Mammary epithelial cell (primary cell): ENCODE measurements at regions of chr6 and their contacts with region 1.

Region 1: DNA sequence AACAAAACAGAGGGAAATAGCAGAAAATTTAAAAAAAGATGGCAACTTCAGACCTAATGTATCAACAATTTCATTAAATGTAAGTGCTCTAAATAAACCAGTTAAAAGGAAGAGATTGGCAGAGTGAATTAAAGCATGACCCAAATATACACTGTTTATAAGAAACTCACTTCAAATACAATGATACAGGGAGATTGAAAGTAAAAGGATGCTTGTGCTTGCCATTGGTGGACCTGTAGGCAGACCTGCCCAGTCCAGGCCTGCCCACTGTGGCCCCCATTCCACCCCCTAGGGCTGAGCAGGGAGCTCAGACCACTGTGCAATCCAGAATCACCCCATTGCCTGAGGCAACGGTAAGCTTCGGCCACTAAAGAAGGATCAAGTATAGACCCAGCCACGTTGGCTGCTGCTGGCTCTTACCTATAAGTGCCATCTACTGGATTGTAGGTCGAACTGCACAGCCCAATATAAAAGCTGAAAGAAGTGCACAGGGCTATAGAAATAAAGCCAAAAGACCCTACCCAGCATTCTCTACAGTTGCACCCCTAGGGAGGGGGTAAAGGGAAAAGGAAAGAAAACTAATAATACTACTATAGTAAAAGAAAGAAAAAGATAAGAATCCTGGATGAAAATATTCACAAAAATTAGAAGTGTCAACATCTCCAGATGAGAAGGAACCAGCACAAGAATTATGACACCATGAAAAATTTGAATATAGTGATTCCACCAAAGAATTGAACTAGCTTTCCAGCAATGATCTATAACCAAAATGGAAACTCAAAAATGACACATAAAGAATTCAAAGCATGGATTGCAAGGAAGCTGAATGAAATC is 36.1 kb downstream of the PSMB1 start:
- DNase-seq: peak; percentile 68
- H3K4me3 ChIP-seq: no peak overlapping the region
- H3K27ac ChIP-seq: no peak overlapping the region
- H3K4me1 ChIP-seq: no peaks in the 10 kb centered on the region
- H3K27me3 ChIP-seq: no peaks in the 10 kb centered on the region
- CTCF ChIP-seq: peak; percentile 88 to 90

Region 2: DNA sequence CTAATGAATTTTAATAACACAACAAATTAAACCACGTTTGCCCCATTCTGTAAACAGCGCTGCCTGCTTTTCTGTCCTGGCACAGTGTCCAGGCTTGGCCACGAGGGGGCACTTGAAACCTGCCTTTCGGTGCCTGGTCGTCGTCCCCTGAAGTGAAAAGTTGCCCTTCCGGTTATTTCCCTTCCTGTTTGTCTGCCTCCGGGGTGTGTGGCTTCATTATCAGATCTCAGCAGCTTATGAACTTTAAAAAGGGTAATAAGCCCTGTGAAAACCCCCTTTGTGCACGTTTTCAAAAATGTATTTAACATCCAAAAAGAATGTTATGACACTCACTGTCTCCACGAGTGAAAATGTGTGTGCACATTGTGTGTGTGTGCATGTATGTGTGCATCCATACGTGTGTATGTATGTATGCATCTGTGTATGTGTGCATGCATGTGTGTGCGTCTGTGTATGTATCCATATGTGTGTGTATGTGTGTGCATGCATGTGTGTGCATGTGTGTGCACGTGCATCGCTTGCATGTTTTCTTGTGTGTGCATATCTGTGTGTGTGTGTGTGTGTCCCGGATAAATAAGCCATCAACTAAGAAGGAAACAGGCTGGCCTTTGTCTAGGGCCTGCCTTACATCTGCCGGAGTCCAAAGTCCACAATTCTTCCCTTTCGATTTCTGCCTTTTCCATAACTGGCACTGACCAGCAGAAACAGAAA is 1621.7 kb before region 1 on chr6:
- CTCF ChIA-PET with region 1: no interaction called
- dilution Hi-C with region 1: no loop called
- in situ Hi-C with region 1: no loop called
- intact Hi-C with region 1: loop called (anchors 5 kb)
- DNase-seq: peak; percentile 64
- H3K4me3 ChIP-seq: no peak overlapping the region
- H3K27ac ChIP-seq: no peak overlapping the region
- H3K4me1 ChIP-seq: peaks cover 4% of the 10 kb centered on the region
- H3K27me3 ChIP-seq: no peaks in the 10 kb centered on the region
- CTCF ChIP-seq: peak; percentile 95 to 96

Region 3: GRCh38 chr6:169950558-169950957 is 566.4 kb before region 1 on chr6:
- CTCF ChIA-PET with region 1: no interaction called
- dilution Hi-C with region 1: no loop called
- in situ Hi-C with region 1: loop called in 1 of 2 experiments (anchors 10 kb)
- intact Hi-C with region 1: loop called (anchors 2 kb)
- DNase-seq: peak; percentile 7
- H3K4me3 ChIP-seq: no peak overlapping the region
- H3K27ac ChIP-seq: no peak overlapping the region
- H3K4me1 ChIP-seq: no peaks in the 10 kb centered on the region
- H3K27me3 ChIP-seq: no peaks in the 10 kb centered on the region
- CTCF ChIP-seq: peak; percentile 31 to 58

Region 4: DNA sequence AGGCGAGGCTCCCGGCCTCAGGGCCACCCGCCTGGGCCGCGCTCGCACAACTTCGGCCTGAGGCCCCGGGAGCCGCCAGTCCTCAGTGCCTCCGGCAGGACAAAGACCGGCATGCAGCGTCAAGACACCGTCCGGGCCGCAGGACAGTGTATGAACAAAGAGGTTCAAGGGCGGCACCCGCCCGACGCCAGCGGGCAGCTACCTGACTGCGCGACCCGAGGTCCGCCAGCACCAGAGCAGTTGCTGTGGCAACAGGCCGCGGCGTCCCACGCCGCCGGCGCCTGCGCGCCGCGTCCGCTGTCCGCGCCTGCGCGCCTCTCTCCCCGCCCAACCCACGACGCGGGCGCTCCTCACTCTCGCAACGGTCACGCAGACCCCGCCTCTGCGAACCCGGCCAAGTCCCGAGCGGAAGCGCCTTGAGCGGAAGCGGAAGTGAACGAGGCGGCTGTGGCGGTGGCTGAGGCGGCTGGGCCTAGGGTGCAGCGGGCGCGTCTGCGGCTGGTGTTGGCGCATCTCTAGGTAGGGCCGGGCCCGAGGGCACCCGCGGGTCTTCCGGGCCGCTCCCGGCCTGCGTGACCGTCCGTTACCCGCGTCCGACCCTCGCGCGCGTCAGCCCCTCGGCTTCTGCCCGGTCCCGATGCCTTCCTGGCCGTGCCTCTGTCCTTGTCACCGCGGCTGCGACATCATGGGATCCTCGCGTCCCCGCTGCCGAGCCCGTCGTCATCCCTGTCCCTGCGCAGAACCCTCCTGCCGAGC is 210.5 kb before region 1 on chr6 and contains the start of gene FAM120B:
- CTCF ChIA-PET with region 1: no interaction called
- dilution Hi-C with region 1: no loop called
- in situ Hi-C with region 1: no loop called
- intact Hi-C with region 1: loop called (anchors 5 kb)
- DNase-seq: peak; percentile 93
- H3K4me3 ChIP-seq: peak within 1 kb of the TSS; percentile 72 to 98 (median 98)
- H3K27ac ChIP-seq: peak within 1 kb of the TSS; percentile 78
- H3K4me1 ChIP-seq: peaks cover 22% of the 10 kb centered on the region
- H3K27me3 ChIP-seq: no peaks in the 10 kb centered on the region
- CTCF ChIP-seq: no peak
- total RNA-seq, gene FAM120B: 27.3 to 29.7 TPM

Region 5: DNA sequence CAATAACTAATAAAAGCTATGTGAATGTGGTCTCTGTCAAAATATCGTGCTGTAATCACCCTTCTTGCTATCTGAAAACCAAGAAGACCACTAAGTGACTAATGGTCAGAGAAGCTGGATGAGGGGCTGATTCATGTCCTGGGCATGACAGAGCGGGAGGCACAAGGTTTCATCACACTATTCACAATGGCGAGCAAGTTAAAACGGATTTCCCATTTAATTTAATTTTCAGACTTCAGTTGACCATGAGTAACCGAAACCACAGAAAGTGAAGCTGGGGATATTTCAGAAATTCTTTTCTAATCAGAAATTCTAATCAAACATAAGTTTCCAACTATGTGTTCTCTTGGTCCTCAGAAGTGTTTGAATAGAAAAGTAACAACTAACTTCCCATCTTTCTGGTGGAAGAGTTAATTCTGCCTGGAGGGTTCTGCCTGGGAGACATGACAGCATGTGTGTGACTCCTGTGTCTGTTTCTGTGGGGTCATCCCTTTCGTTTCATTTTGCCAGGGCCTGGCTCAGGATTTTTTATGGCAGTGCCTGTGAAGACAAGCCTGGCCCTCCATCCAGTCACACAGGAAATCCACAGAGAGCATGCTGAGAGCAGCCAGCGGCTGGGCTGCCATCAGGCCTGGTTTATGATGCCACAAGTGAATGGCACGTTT is 111.6 kb before region 1 on chr6:
- CTCF ChIA-PET with region 1: no interaction called
- dilution Hi-C with region 1: no loop called
- in situ Hi-C with region 1: no loop called
- intact Hi-C with region 1: loop called (anchors 10 kb)
- DNase-seq: peak; percentile 98
- H3K4me3 ChIP-seq: no peak overlapping the region
- H3K27ac ChIP-seq: peak overlapping the region; percentile 98
- H3K4me1 ChIP-seq: peaks cover 39% of the 10 kb centered on the region
- H3K27me3 ChIP-seq: no peaks in the 10 kb centered on the region
- CTCF ChIP-seq: no peak

Region 6: GRCh38 chr6:170545405-170545804 is 28.4 kb after region 1 on chr6:
- CTCF ChIA-PET with region 1: no interaction called
- dilution Hi-C with region 1: no loop called
- in situ Hi-C with region 1: no loop called
- intact Hi-C with region 1: no loop called
- DNase-seq: no peak
- H3K4me3 ChIP-seq: no peak overlapping the region
- H3K27ac ChIP-seq: no peak overlapping the region
- H3K4me1 ChIP-seq: peaks cover 31% of the 10 kb centered on the region
- H3K27me3 ChIP-seq: no peaks in the 10 kb centered on the region
- CTCF ChIP-seq: no peak